ENCODE measurements at regions of chr10 and their contacts with region 1.

Region 1: GRCh38 chr10:104045151-104046089 is 40.3 kb downstream of the COL17A1 start:
- DNase-seq: peak; percentile 76
- H3K4me3 ChIP-seq: no peak overlapping the region
- H3K27ac ChIP-seq: no peak overlapping the region
- H3K4me1 ChIP-seq: peaks cover 17% of the 10 kb centered on the region
- H3K27me3 ChIP-seq: no peaks in the 10 kb centered on the region
- CTCF ChIP-seq: peak; percentile 56 to 86
- POLR2A ChIP-seq: no peak

Region 2: GRCh38 chr10:103720328-103720963 is 325.0 kb before region 1 on chr10:
- CTCF ChIA-PET with region 1: no interaction called
- POLR2A ChIA-PET with region 1: no interaction called
- dilution Hi-C with region 1: no loop called
- intact Hi-C with region 1: no loop called
- DNase-seq: no peak
- H3K4me3 ChIP-seq: no peak overlapping the region
- H3K27ac ChIP-seq: no peak overlapping the region
- H3K4me1 ChIP-seq: no peaks in the 10 kb centered on the region
- H3K27me3 ChIP-seq: no peaks in the 10 kb centered on the region
- CTCF ChIP-seq: no peak
- POLR2A ChIP-seq: no peak

Region 3: DNA sequence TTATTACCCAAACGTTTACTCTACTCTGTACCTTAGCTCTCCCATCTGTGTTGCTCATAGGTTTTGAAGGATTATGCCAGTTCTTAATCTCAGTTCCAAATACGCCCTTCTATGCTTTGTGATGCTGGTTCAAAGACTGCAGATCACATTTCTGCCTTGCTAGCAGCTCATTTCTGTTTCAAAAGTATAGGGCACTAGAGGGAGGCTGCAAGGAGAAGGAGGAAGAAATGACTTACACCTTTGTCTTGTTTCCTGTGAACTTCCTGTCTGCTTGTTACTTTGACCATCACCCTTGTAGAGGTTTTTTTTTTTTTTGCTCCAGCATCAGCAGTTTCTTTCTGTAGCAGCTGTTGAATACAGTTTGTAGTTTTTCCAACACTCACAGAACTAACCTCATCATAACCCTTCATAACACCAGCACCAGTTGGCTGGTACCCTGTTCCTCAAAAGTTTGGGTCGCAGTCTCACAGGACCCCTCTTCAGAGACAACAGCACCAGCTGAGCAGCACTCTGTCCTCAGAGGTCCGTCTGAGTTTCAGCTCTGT is 62.0 kb before region 1 on chr10:
- CTCF ChIA-PET with region 1: no interaction called
- POLR2A ChIA-PET with region 1: no interaction called
- dilution Hi-C with region 1: no loop called
- intact Hi-C with region 1: loop called (anchors 2 kb)
- DNase-seq: peak; percentile 57
- H3K4me3 ChIP-seq: peak overlapping the region in 1 of 3 experiments; percentile 27
- H3K27ac ChIP-seq: peak overlapping the region; percentile 83
- H3K4me1 ChIP-seq: peaks cover 65% of the 10 kb centered on the region
- H3K27me3 ChIP-seq: no peaks in the 10 kb centered on the region
- CTCF ChIP-seq: no peak
- POLR2A ChIP-seq: no peak

Region 4: DNA sequence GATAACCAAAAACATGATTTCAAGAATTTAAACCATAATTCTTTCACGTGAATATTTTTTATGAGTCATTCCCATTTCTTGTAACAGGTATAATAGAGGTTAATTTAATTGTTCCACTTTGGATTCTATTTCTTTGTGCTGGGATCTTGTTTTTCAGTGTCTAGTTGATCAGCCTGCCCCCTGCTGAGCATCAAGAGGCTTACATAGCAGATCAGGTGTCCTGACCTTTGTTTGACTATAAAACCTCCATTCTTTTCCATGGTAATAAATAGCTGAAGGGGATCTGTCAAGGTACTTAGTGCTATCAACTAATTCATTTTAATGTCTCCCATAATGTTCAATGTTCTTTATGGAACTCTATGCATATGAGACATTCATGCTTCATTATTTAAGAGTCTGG is 35.3 kb after region 1 on chr10:
- CTCF ChIA-PET with region 1: interaction called, 18 read pairs
- POLR2A ChIA-PET with region 1: no interaction called
- dilution Hi-C with region 1: no loop called
- intact Hi-C with region 1: loop called (anchors 1 kb)
- DNase-seq: peak; percentile 45
- H3K4me3 ChIP-seq: no peak overlapping the region
- H3K27ac ChIP-seq: no peak overlapping the region
- H3K4me1 ChIP-seq: peaks cover 18% of the 10 kb centered on the region
- H3K27me3 ChIP-seq: no peaks in the 10 kb centered on the region
- CTCF ChIP-seq: peak; percentile 46 to 49
- POLR2A ChIP-seq: no peak

Region 5: DNA sequence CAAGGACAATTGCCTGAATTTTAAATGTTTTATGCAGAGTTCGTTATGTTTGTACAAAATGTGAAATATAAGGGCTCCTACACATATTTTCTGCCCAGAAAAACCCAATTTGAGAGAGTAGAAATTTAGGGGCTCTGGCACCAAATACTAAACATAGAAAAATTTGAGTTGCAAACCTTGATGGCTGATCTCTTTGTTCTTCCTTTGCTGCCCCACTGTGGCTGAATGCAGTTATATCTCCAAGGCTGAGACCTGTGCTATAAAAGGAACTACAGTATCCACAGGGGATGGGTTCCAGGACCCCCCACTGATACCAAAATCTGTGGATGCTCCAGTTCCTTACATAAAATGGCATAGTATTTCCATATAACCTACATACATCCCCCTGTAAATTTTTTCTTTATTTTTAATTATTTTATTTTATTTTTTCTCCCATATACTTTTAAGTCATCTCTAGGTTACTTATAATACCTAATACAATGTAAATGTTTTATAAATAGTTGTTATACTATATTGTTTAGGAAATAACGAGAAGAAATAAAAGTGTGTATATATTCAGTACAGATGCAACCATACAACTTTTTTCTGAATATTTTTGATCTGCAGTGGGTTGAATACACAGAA is 164.3 kb after region 1 on chr10:
- CTCF ChIA-PET with region 1: interaction called, 19 read pairs
- POLR2A ChIA-PET with region 1: no interaction called
- dilution Hi-C with region 1: no loop called
- intact Hi-C with region 1: loop called (anchors 1 kb)
- DNase-seq: peak; percentile 55
- H3K4me3 ChIP-seq: no peak overlapping the region
- H3K27ac ChIP-seq: no peak overlapping the region
- H3K4me1 ChIP-seq: no peaks in the 10 kb centered on the region
- H3K27me3 ChIP-seq: peaks cover 2 to 8% of the 10 kb centered on the region in 2 experiments
- CTCF ChIP-seq: peak; percentile 42 to 51
- POLR2A ChIP-seq: no peak

Region 6: GRCh38 chr10:104254493-104255310 is 209.3 kb after region 1 on chr10 and contains the start of gene GSTO1:
- CTCF ChIA-PET with region 1: interaction called, 6 read pairs
- POLR2A ChIA-PET with region 1: no interaction called
- dilution Hi-C with region 1: no loop called
- intact Hi-C with region 1: loop called (anchors 2 kb)
- DNase-seq: peak; percentile 64
- H3K4me3 ChIP-seq: peak within 1 kb of the TSS; percentile 65 to 99 (median 82)
- H3K27ac ChIP-seq: peak within 1 kb of the TSS; percentile 99
- H3K4me1 ChIP-seq: peaks cover 44% of the 10 kb centered on the region
- H3K27me3 ChIP-seq: peaks cover 2% of the 10 kb centered on the region in 2 experiments
- CTCF ChIP-seq: no peak
- POLR2A ChIP-seq: peak; percentile 83
- total RNA-seq, gene GSTO1: 195 and 211 TPM in 2 replicates

Region 7: DNA sequence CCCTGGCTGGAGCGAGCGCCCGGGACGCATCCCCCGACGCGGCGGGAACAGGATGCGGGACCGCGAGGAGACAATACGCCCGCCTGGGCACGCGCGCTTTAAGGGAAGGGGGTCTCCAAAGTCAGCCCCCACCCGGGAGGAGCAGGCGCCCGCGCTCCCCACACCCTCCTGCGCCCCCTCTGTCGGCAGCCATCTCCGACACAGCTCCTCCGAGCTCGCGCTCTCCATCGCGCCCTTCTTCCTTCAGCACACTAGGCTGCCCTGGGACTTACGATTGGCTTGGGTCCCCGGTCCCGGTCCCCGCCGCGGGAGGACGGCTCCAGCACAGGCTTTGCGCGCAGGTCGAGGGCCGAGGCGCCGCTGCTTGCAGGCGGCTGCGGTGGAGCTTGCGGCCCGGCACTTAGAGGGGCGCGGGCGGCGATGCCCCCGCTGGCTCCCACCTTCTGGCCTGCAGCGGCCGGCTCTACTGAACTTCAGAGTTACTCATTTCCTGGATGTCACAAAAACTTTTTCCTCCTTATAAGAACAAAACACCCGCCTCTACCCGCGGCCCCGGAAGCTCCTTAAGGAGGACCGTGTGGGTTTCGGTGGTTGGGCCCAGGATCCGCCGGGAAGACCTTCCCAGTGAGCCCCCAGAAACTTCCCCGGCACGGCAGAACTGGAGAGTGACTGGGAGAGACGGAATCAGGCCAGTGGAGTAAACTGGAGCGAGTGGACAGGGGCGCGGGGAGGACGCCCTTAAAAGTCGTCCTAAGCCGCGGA is 292.7 kb after region 1 on chr10 and contains the start of gene ITPRIP:
- CTCF ChIA-PET with region 1: no interaction called
- POLR2A ChIA-PET with region 1: no interaction called
- dilution Hi-C with region 1: no loop called
- intact Hi-C with region 1: loop called (anchors 10 kb)
- DNase-seq: peak; percentile 93
- H3K4me3 ChIP-seq: peak within 1 kb of the TSS; percentile 64 to 99 (median 94)
- H3K27ac ChIP-seq: peak within 1 kb of the TSS; percentile 100
- H3K4me1 ChIP-seq: peaks cover 53% of the 10 kb centered on the region
- H3K27me3 ChIP-seq: no peaks in the 10 kb centered on the region
- CTCF ChIP-seq: peak; percentile 14 to 32
- POLR2A ChIP-seq: peak; percentile 77
- total RNA-seq, gene ITPRIP: 31.4 and 33.3 TPM in 2 replicates

Region 8: GRCh38 chr10:104353325-104354048 is 308.1 kb after region 1 on chr10 and contains the start of gene CFAP58:
- CTCF ChIA-PET with region 1: no interaction called
- POLR2A ChIA-PET with region 1: no interaction called
- dilution Hi-C with region 1: no loop called
- intact Hi-C with region 1: loop called (anchors 1 kb)
- DNase-seq: peak; percentile 88
- H3K4me3 ChIP-seq: peak within 1 kb of the TSS; percentile 38 to 66 (median 42)
- H3K27ac ChIP-seq: no peak within 1 kb of the TSS
- H3K4me1 ChIP-seq: peaks cover 13% of the 10 kb centered on the region
- H3K27me3 ChIP-seq: peaks cover 0 to 5% of the 10 kb centered on the region in 2 experiments
- CTCF ChIP-seq: peak; percentile 66 to 75
- POLR2A ChIP-seq: no peak
- total RNA-seq, gene CFAP58: 0.29 and 0.35 TPM in 2 replicates